Breast epithelium (tissue), 4 donors: ENCODE measurements at regions of chr16 and their contacts with region 1.

Region 1: GRCh38 chr16:63050391-63050790 is 1014.2 kb upstream of the CDH8 start:
- DNase-seq: no peak
- H3K4me3 ChIP-seq: no peak overlapping the region
- H3K27ac ChIP-seq: no peak overlapping the region
- H3K4me1 ChIP-seq: no peaks in the 10 kb centered on the region
- H3K27me3 ChIP-seq: no peaks in the 10 kb centered on the region
- CTCF ChIP-seq: no peak
- POLR2A ChIP-seq: no peak

Region 2: DNA sequence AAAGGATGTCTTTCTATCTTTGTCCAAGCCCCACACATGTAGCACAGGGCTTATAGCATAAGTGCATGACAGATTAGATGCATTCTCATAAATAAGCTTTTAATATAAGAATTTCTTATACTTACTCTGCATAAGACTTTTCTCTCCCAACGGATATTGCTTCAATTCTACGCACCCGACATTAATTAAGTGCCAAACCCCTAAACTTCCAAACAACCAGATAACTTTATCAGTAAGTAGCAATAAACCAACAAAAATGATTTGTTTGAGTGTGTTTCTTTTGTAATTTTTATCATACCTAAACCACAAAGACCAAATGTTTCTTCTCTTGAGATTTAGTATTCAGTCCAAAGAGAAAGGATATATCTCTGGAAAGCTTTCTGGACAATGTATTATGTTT is 1405.7 kb before region 1 on chr16:
- intact Hi-C with region 1: no loop called
- DNase-seq: no peak
- H3K4me3 ChIP-seq: no peak overlapping the region
- H3K27ac ChIP-seq: no peak overlapping the region
- H3K4me1 ChIP-seq: no peaks in the 10 kb centered on the region
- H3K27me3 ChIP-seq: no peaks in the 10 kb centered on the region
- CTCF ChIP-seq: no peak
- POLR2A ChIP-seq: no peak

Region 3: GRCh38 chr16:63568164-63568563 is 517.8 kb after region 1 on chr16:
- intact Hi-C with region 1: loop called (anchors 5 kb)
- DNase-seq: no peak
- H3K4me3 ChIP-seq: no peak overlapping the region
- H3K27ac ChIP-seq: no peak overlapping the region
- H3K4me1 ChIP-seq: no peaks in the 10 kb centered on the region
- H3K27me3 ChIP-seq: no peaks in the 10 kb centered on the region
- CTCF ChIP-seq: no peak
- POLR2A ChIP-seq: no peak